Calu3 (cell line): ENCODE measurements at regions of chr3 and their contacts with region 1.

Region 1: GRCh38 chr3:142129516-142130171 is 19.7 kb downstream of the TFDP2 start:
- DNase-seq: no peak
- H3K4me3 Mint-ChIP-seq: no peak overlapping the region
- H3K27ac Mint-ChIP-seq: no peak overlapping the region
- H3K4me1 Mint-ChIP-seq: no peaks in the 10 kb centered on the region
- H3K27me3 Mint-ChIP-seq: no peaks in the 10 kb centered on the region
- CTCF ChIP-seq: peak; percentile 35

Region 2: DNA sequence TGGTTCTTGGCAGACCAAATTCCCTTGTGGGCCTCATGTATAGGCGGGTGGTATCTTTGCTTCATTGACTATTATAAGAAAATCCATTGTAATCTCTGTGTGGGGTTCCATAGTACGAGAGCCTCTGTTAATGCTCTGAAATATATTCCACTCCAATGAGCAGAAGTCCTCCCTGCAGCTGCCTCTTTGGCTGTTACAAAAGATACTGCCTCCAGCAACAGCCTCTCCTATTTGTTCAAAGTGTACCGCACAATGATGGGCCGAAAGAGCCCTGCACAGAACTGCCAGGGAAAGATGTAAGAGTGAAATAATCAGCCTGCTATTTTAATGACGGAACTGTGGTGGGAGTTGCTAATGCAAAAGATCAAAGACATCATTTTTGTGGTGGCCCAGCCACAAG is 317.6 kb before region 1 on chr3:
- CTCF ChIA-PET with region 1: no interaction called
- intact Hi-C with region 1: no loop called
- DNase-seq: no peak
- H3K4me3 Mint-ChIP-seq: no peak overlapping the region
- H3K27ac Mint-ChIP-seq: no peak overlapping the region
- H3K4me1 Mint-ChIP-seq: no peaks in the 10 kb centered on the region
- H3K27me3 Mint-ChIP-seq: peaks cover 29% of the 10 kb centered on the region
- CTCF ChIP-seq: no peak

Region 3: GRCh38 chr3:141875374-141875892 is 254.2 kb before region 1 on chr3:
- CTCF ChIA-PET with region 1: no interaction called
- intact Hi-C with region 1: no loop called
- DNase-seq: peak; percentile 95
- H3K4me3 Mint-ChIP-seq: peak overlapping the region; percentile 99
- H3K27ac Mint-ChIP-seq: peak overlapping the region; percentile 81
- H3K4me1 Mint-ChIP-seq: peaks cover 36% of the 10 kb centered on the region
- H3K27me3 Mint-ChIP-seq: no peaks in the 10 kb centered on the region
- CTCF ChIP-seq: peak; percentile 94

Region 4: DNA sequence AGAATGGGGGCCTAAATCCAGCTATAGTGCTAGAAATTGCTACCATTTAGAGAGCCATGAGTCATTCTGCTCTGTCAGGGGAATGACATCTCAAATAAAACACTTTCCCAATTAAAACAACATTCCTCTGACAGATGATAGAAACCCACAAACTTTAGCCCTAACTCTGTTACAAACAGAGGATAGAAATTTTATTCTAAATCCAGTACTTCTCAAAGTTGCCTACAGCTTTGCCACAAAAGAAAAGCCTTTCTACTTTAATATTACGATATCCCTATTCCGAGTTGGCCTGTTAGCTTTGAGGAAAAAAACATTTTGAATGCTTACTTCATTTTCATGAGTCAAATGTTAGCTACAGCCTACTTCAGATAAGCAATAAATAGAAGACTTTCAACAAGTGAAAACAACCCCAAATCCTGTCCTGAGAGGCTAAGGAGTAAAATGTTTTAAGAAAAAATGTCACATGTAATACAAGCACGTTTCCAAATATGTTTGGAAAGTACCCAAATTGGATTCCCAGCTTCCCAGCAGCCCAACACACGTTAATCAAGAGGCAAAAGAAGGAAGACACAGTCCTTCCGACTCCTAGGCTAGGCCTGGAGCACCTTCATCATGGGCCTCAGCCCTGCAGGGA is 169.6 kb before region 1 on chr3:
- CTCF ChIA-PET with region 1: no interaction called
- intact Hi-C with region 1: loop called (anchors 10 kb)
- DNase-seq: no peak
- H3K4me3 Mint-ChIP-seq: no peak overlapping the region
- H3K27ac Mint-ChIP-seq: no peak overlapping the region
- H3K4me1 Mint-ChIP-seq: no peaks in the 10 kb centered on the region
- H3K27me3 Mint-ChIP-seq: no peaks in the 10 kb centered on the region
- CTCF ChIP-seq: no peak

Region 5: GRCh38 chr3:142148792-142149672 is 19.4 kb after region 1 on chr3 and contains the start of gene TFDP2:
- CTCF ChIA-PET with region 1: interaction called, 8 read pairs
- intact Hi-C with region 1: loop called (anchors 2 kb)
- DNase-seq: peak; percentile 97
- H3K4me3 Mint-ChIP-seq: peak within 1 kb of the TSS; percentile 93
- H3K27ac Mint-ChIP-seq: peak within 1 kb of the TSS; percentile 36
- H3K4me1 Mint-ChIP-seq: peaks cover 19% of the 10 kb centered on the region
- H3K27me3 Mint-ChIP-seq: no peaks in the 10 kb centered on the region
- CTCF ChIP-seq: no peak
- total RNA-seq, gene TFDP2: 51.8 and 54.8 TPM in 2 replicates

Region 6: DNA sequence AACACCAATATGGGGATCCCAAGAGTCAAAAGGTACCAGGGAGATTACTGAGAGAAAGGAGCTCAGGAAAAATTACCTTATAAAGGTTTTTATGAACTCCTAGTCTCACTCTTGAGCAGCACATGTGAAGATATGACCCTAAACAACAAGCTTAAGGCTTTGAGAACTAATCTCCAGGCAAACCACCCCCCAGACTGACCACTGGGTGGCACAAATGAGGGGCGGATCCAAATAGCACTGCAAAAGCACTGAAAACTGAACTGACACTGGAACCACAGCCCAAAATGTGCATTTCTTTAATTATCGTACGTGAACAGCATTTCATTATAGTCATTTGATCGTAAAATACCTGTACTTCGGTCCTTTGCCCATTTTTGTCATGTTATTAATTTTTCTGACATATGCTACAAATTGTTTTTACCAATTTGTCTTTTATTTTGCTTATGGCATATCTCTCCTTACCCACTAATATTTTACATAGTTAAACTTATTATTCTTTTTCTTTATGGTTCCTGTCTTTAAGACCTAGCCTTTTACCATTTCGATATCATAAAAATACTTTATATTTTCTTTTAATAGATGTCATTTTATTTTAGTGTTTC is 51.2 kb after region 1 on chr3:
- CTCF ChIA-PET with region 1: interaction called, 9 read pairs
- intact Hi-C with region 1: loop called (anchors 2 kb)
- DNase-seq: peak; percentile 75
- H3K4me3 Mint-ChIP-seq: no peak overlapping the region
- H3K27ac Mint-ChIP-seq: no peak overlapping the region
- H3K4me1 Mint-ChIP-seq: no peaks in the 10 kb centered on the region
- H3K27me3 Mint-ChIP-seq: no peaks in the 10 kb centered on the region
- CTCF ChIP-seq: peak; percentile 77

Region 7: GRCh38 chr3:142209655-142210054 is 80.0 kb after region 1 on chr3:
- CTCF ChIA-PET with region 1: interaction called, 6 read pairs
- intact Hi-C with region 1: loop called (anchors 5 kb)
- DNase-seq: no peak
- H3K4me3 Mint-ChIP-seq: no peak overlapping the region
- H3K27ac Mint-ChIP-seq: no peak overlapping the region
- H3K4me1 Mint-ChIP-seq: peaks cover 14% of the 10 kb centered on the region
- H3K27me3 Mint-ChIP-seq: no peaks in the 10 kb centered on the region
- CTCF ChIP-seq: no peak

Region 8: DNA sequence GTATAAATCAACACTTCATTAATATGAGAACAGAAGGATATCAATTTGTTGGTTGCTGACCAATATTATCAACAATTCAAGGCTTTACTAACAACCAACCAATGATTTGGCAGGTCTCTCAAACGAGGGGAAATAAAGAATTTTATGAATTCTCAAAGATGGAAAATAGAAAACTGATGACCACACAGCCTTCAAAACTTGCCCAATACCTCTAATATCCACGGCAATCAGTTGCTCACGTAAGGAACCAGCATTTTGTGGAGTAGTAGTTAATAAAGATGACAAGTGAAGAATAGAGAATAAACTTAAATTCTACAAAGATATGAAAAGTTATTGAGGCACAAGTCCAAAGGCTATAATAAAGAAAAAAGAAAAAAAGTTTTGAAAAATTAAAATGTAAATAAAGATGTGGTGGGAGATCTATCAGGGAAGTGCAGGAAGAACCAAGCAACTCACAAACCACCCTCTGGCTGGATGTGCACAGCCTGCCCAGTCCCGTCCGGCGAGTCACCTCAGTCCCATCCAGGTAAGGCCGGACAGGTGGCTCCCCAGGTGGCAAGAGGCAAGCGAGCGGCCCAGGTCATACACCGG is 94.9 kb after region 1 on chr3:
- CTCF ChIA-PET with region 1: no interaction called
- intact Hi-C with region 1: loop called (anchors 2 kb)
- DNase-seq: no peak
- H3K4me3 Mint-ChIP-seq: peak overlapping the region; percentile 94
- H3K27ac Mint-ChIP-seq: peak overlapping the region; percentile 92
- H3K4me1 Mint-ChIP-seq: peaks cover 45% of the 10 kb centered on the region
- H3K27me3 Mint-ChIP-seq: no peaks in the 10 kb centered on the region
- CTCF ChIP-seq: no peak

Region 9: DNA sequence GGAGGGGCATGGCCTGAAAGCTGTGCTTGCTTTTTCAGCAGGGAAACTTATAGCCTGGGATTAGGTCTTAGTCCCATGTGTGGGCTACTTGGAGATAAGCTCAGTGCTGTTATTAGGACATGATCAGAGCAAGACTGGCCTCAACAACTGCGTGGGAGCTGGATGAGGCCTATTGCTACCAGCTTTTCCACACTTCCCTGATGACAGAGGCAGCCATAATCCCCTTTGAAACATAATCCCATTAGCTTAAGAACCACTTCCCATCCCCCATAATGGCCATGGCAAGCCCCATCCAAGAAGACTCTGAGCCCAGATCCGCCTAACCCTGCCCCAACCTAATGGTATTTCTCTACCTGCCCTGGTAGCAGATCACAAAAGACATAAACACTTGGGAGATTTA is 122.3 kb after region 1 on chr3:
- CTCF ChIA-PET with region 1: no interaction called
- intact Hi-C with region 1: no loop called
- DNase-seq: no peak
- H3K4me3 Mint-ChIP-seq: no peak overlapping the region
- H3K27ac Mint-ChIP-seq: no peak overlapping the region
- H3K4me1 Mint-ChIP-seq: no peaks in the 10 kb centered on the region
- H3K27me3 Mint-ChIP-seq: no peaks in the 10 kb centered on the region
- CTCF ChIP-seq: no peak

Region 10: DNA sequence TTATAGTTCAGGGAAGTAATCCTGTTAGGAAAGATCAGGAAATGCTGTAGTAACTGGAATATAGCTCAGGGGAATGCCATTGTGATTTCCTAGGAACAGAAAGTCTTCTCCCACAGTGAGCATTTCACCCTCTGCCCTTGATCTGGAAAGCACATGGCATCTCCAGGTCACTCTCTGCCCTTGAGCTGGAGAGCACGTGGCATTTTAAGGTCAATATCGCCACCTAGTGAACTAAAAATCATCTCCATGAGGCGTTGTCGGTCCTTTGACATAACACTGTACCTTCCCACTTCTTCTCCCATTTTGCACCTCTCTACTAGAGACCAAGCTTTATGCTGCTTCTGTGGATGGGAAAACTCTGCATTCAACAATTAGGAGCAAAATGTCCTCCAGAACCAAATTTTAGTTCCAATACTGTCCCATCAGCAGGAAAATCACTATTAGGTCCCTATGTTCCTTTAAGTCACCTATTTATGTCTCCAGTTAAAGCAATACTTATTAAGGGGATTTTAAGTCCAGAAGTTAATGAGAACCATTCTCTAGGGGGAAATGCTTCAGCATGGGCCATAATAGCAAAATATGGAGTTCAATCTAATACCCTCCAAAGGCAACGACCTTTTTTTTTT is 150.4 kb after region 1 on chr3:
- CTCF ChIA-PET with region 1: interaction called, 24 read pairs
- intact Hi-C with region 1: loop called (anchors 1 kb)
- DNase-seq: peak; percentile 64
- H3K4me3 Mint-ChIP-seq: no peak overlapping the region
- H3K27ac Mint-ChIP-seq: no peak overlapping the region
- H3K4me1 Mint-ChIP-seq: peaks cover 13% of the 10 kb centered on the region
- H3K27me3 Mint-ChIP-seq: no peaks in the 10 kb centered on the region
- CTCF ChIP-seq: peak; percentile 84